ENCODE measurements at regions of chr6 and their contacts with region 1.

Region 1: GRCh38 chr6:53492860-53493634 is 51.9 kb downstream of the GCLC start:
- DNase-seq: peak; percentile 10 to 32
- H3K4me3 ChIP-seq: no peak overlapping the region
- H3K27ac ChIP-seq: no peak overlapping the region
- H3K4me1 ChIP-seq: peaks cover 3 to 5% of the 10 kb centered on the region in 2 donors
- H3K27me3 ChIP-seq: no peaks in the 10 kb centered on the region
- CTCF ChIP-seq: peak; percentile 37 to 87 (median 66)
- POLR2A ChIP-seq: no peak

Region 2: GRCh38 chr6:53080813-53081212 is 412.2 kb before region 1 on chr6:
- intact Hi-C with region 1: no loop called
- DNase-seq: no peak
- H3K4me3 ChIP-seq: no peak overlapping the region
- H3K27ac ChIP-seq: no peak overlapping the region
- H3K4me1 ChIP-seq: no peaks in the 10 kb centered on the region
- H3K27me3 ChIP-seq: no peaks in the 10 kb centered on the region
- CTCF ChIP-seq: no peak
- POLR2A ChIP-seq: no peak

Region 3: DNA sequence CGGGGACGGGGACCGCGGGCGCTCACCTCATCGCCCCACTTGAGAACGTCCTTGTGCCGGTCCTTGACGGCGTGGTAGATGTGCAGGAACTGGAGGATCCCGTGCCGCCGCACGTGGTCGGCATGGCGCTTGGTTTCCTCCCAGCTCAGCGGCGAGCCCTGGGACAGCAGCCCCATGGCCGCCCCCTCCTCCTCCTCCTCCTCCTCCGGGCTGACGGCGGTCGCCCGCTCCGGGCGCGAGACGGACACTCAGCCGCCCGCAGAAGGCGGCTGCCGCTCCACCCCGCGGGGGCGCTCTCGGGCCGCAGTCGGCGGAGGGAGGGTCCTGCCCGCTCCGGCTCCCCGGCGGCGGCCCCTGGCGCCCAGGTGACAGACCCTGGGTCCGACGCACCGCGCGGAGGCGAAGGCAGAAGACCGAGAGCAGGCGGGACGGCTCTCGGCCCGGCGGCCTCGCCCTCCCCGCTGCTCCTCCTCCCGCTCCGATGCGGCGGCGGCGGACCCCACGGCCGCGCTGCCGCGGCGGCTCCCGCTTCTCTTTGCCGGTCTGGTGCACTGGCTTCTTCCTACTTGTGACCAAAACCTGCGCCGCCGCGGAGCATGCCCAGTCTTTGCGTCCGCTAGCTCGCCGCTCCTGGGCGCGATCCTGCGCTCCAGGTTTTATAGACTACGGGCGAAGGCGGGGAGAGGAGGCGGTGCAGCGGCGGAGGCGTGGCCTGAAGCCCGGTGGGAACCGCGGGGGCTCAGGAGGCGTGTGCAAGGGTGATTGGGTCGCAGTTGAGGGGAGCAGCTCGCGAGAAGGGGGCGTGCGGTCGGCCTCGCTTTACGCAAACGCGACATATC is 51.6 kb after region 1 on chr6 and contains the start of gene GCLC:
- intact Hi-C with region 1: loop called (anchors 5 kb)
- DNase-seq: peak; percentile 94 to 95
- H3K4me3 ChIP-seq: peak within 1 kb of the TSS; percentile 68 to 85 (median 75)
- H3K27ac ChIP-seq: peak within 1 kb of the TSS; percentile 93 to 94 (median 93)
- H3K4me1 ChIP-seq: peaks cover 13 to 25% of the 10 kb centered on the region in 2 donors
- H3K27me3 ChIP-seq: no peaks in the 10 kb centered on the region
- CTCF ChIP-seq: peak; percentile 21 to 80 (median 74)
- POLR2A ChIP-seq: peak; percentile 58 to 95
- total RNA-seq, gene GCLC: 67.3 to 210 (median 82.0) TPM

Region 4: GRCh38 chr6:53647462-53648094 is 154.5 kb after region 1 on chr6:
- intact Hi-C with region 1: loop called (anchors 5 kb)
- DNase-seq: no peak
- H3K4me3 ChIP-seq: no peak overlapping the region
- H3K27ac ChIP-seq: no peak overlapping the region
- H3K4me1 ChIP-seq: peaks cover 0 to 12% of the 10 kb centered on the region in 2 donors
- H3K27me3 ChIP-seq: no peaks in the 10 kb centered on the region
- CTCF ChIP-seq: no peak
- POLR2A ChIP-seq: no peak

Region 5: GRCh38 chr6:53725791-53726431 is 232.9 kb after region 1 on chr6:
- intact Hi-C with region 1: loop called (anchors 5 kb)
- DNase-seq: peak; percentile 77 to 85
- H3K4me3 ChIP-seq: no peak overlapping the region
- H3K27ac ChIP-seq: no peak overlapping the region
- H3K4me1 ChIP-seq: peaks cover 10 to 32% of the 10 kb centered on the region in 2 donors
- H3K27me3 ChIP-seq: no peaks in the 10 kb centered on the region
- CTCF ChIP-seq: peak; percentile 91 to 97 (median 94)
- POLR2A ChIP-seq: no peak

Measured in thyroid gland (tissue), 4 donors.